HepG2 (cell line): ENCODE measurements at regions of chr12 and their contacts with region 1.

Region 1: GRCh38 chr12:70982991-70983390 is 62.5 kb upstream of the PTPRR start:
- DNase-seq: no peak
- ATAC-seq: no peak
- H3K4me3 ChIP-seq: no peak overlapping the region
- H3K27ac ChIP-seq: no peak overlapping the region
- H3K4me1 ChIP-seq: no peaks in the 10 kb centered on the region
- H3K27me3 ChIP-seq: no peaks in the 10 kb centered on the region
- CTCF ChIP-seq: no peak
- EP300 ChIP-seq: no peak
- POLR2A ChIP-seq: no peak
- RAD21 ChIP-seq: no peak

Region 2: DNA sequence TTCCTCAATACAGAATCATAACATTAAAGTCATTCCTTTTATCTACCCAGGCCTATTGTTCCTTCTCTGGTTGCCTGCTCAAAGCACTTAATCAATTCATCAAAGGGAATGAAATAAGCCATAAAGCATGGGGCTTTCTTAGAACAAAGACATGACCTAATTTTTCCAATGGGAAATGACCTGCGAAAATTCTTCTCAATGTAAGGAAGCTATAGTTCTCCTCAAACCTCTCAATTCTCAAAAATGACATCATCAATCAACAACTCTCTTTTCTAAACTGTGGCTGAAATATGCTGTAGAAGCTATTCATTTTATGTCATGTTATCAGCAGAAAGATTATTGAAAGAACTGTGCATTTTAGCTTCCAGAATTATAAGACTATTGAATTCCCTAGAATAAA is 53.5 kb after region 1 on chr12:
- CTCF ChIA-PET with region 1: no interaction called
- POLR2A ChIA-PET with region 1: no interaction called
- in situ Hi-C with region 1: no loop called
- intact Hi-C with region 1: no loop called
- DNase-seq: no peak
- ATAC-seq: no peak
- H3K4me3 ChIP-seq: no peak overlapping the region
- H3K27ac ChIP-seq: no peak overlapping the region
- H3K4me1 ChIP-seq: no peaks in the 10 kb centered on the region
- H3K27me3 ChIP-seq: no peaks in the 10 kb centered on the region; a peak in 1 of 5 replicates
- CTCF ChIP-seq: no peak
- EP300 ChIP-seq: no peak
- POLR2A ChIP-seq: no peak
- RAD21 ChIP-seq: no peak

Region 3: DNA sequence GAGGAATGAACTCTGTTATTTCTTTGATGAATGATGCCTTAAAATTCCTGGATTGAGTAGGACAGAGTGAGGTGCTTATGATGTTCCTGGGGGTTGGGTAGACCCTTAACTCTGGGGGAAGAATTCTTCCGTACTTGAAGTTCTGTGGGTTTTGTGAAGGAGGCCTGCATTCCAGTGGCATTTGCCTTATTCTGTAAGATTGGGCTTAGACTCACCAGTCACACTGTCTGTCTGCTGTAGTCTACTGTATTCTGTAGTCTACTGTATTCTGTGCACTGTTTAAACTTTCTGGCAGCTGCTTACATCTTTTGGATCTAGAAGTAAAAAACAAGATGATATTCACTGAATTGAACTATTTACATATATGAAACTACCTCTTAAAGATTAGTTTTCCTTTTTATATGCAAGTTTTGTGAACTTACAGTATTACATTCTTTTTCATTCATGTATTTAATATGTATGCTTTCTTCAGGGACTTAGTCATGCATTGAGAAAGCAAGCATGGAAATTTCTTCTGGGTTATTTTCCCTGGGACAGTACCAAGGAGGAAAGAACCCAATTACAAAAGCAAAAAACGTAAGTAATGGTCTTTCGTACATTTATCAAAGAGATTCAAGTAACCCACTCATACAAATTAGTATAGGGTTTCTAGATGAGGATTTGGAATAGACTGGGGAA is 913.4 kb after region 1 on chr12:
- CTCF ChIA-PET with region 1: no interaction called
- POLR2A ChIA-PET with region 1: no interaction called
- in situ Hi-C with region 1: no loop called
- intact Hi-C with region 1: loop called (anchors 5 kb)
- DNase-seq: no peak
- ATAC-seq: no peak
- H3K4me3 ChIP-seq: no peak overlapping the region
- H3K27ac ChIP-seq: no peak overlapping the region
- H3K4me1 ChIP-seq: no peaks in the 10 kb centered on the region
- H3K27me3 ChIP-seq: no peaks in the 10 kb centered on the region
- CTCF ChIP-seq: no peak
- EP300 ChIP-seq: no peak
- POLR2A ChIP-seq: no peak
- RAD21 ChIP-seq: no peak